ENCODE measurements at regions of chr17 and their contacts with region 1.

Region 1: DNA sequence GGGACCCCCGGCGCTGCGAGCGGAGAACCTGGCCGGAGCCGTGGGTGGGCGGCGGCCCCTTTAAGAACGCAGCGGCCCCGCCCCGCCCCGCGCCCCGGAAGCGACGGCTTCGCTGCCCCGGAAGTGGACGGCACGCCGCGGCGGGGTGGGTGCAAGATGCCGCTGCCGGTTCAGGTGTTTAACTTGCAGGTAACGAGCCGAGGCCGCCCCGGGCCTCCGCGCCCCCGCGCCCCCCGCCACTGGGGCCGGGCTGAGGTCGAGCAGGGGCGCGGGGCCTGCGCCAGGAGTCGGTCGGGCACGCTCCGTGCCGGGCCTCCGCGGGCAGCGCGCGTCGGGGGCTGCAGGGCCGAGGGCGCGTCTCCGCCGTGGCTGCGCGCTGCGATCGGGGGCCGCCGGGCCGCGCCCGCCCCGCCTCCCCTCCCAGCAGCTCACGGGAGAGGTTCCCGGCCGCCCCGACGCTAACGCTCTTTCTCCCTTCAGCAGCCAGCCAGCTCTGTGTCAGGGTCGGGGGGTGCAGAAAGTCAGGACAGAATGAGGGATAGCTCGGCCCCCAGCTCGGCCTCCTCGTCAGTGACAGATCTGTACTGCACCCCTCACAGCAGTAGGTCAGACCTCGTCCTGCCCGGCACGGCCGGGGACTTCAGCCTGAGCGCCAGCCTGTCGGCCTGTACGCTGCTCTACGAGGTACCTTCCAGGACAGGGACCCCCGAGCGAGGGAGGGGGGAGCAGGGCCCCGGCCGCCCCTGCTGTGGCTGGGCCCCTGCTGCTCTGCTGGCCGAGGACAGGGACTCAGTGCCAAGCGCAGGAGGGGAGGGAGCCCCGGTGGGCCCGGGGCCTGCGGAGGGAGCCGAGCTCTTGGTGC is at the starts of genes GPS1 and RFNG:
- DNase-seq: peak; percentile 87
- ATAC-seq: peak; percentile 96
- H3K4me3 Mint-ChIP-seq: peak within 1 kb of the TSS; percentile 83
- H3K27ac Mint-ChIP-seq: peak within 1 kb of the TSS; percentile 78
- H3K4me1 Mint-ChIP-seq: peaks cover 28% of the 10 kb centered on the region
- H3K27me3 Mint-ChIP-seq: no peaks in the 10 kb centered on the region
- total RNA-seq, gene GPS1: 92.4 to 106 TPM
- total RNA-seq, gene RFNG: 20.9 to 23.0 TPM

Region 2: DNA sequence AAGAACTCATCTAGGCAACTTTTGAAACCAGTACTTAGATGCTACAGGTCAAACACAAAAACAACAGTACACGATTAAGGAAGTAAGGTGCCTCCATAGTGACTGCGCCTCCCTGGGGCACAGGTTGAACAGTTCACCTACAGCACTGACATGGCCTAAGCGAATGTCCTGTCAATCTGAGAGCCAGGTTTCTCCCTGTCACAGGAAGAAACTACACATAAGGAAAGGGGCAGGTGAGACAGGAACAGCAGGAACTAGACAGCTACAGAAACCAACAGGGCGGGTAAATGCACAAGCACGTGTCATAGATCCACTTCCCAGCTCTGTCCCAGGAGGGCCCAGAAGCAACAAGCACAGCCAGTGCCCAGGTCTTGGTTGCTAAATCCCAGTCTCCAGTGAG is 172.9 kb before region 1 on chr17:
- CTCF ChIA-PET with region 1: no interaction called
- DNase-seq: no peak
- ATAC-seq: no peak
- H3K4me3 Mint-ChIP-seq: no peak overlapping the region
- H3K27ac Mint-ChIP-seq: no peak overlapping the region
- H3K4me1 Mint-ChIP-seq: peaks cover 2% of the 10 kb centered on the region
- H3K27me3 Mint-ChIP-seq: no peaks in the 10 kb centered on the region

Region 3: DNA sequence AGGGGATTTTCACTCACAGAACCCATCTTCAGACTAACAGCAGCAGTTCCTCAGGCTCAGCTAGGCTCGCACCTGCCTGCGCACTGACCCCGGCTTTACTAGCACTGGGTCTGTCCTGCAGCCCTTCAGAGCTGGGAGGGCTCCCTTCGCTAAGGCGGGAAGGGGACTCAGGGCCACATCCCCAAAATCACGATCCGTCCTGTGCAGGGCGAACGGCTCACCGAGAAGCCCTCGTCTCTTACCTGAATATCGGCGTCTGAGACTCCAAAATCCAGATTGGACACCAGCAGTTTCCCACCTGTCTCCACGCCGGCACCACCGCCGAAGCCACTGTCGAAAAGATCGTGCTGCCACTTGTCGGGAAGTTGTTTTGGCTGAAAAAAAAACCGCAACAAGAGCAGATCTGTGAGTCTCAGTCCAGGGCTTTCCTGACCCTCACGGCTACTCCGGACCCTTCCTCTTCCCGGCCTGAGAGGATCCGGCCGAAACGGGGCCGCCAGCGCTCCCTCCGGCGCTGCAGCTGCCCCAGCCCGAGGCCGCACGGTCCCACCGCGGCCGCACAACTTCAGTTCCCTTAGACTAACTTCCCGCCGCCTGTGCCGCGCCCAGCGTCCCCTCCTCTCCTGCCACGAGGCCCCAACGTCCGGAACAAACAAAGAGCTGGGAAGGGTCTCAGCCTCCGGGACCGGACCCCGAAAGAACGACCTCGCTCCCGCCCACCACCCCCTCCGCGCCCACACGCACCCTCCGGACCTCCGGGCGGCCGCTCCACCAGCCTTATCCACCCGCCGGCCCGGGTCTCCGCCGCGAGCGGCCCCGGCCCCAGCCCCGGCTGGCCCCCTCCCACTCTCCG is 161.3 kb before region 1 on chr17:
- CTCF ChIA-PET with region 1: no interaction called
- DNase-seq: no peak
- ATAC-seq: peak; percentile 5
- H3K4me3 Mint-ChIP-seq: peak overlapping the region; percentile 86
- H3K27ac Mint-ChIP-seq: peak overlapping the region; percentile 96
- H3K4me1 Mint-ChIP-seq: peaks cover 38% of the 10 kb centered on the region
- H3K27me3 Mint-ChIP-seq: no peaks in the 10 kb centered on the region

Region 4: DNA sequence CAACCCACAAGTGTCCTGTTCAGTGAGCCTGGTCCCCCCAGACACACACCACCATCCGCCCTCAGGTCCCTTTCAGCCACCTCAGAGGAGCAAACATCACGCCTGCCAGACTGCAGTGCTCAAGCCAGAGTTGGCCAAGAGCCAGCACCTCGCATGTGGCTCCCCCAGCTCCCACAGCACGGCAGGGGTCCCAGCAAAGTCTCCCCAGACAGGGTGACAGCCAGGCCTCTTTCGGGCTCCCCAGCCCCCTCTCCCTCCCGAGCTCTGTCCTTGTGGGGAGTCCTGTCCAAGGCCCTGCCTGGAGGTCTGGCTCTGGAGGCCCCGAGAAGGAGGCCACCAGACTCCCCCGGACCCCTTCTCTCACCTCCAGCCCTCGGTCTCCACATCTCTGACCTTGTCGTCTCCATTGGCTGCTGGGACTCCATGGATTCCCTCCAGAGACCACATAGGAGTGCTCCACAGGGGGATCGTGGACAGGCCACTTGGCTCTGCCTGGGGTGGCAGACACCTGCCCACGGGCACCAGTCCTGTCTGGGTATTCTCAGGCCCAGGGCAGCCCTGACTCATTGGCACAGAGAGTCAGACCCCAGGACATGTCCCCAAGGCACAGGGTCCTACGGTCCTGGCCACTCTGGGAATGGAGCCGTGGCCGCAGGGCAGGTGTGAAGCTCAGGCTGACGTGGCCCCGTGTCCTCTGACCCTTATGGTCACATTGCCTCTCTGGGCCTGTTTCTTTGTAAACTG is 103.2 kb before region 1 on chr17:
- CTCF ChIA-PET with region 1: no interaction called
- DNase-seq: no peak
- ATAC-seq: no peak
- H3K4me3 Mint-ChIP-seq: no peak overlapping the region
- H3K27ac Mint-ChIP-seq: no peak overlapping the region
- H3K4me1 Mint-ChIP-seq: no peaks in the 10 kb centered on the region
- H3K27me3 Mint-ChIP-seq: peaks cover 8% of the 10 kb centered on the region

Region 5: DNA sequence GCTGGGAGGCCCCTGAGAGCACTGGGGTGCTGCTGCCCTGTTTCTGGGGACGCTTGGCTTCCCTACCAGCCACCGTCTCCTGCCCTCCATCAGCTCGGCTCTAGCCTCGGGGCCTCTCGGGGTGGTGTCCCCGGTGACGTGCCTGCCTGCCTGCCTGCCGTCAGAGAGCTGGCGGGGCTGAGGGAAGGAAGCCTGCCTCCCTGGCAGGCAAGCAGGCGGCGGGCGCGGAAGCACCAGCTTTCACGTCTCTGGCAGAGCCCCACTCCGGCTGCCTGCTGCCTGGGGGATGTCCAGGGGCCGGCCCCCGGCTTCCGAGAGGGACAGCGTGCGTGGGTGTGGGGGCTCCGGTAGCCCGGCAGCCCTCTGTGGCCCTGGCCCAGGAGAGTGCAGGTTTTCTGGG is 38.7 kb before region 1 on chr17:
- CTCF ChIA-PET with region 1: no interaction called
- DNase-seq: no peak
- ATAC-seq: no peak
- H3K4me3 Mint-ChIP-seq: no peak overlapping the region
- H3K27ac Mint-ChIP-seq: no peak overlapping the region
- H3K4me1 Mint-ChIP-seq: peaks cover 7% of the 10 kb centered on the region
- H3K27me3 Mint-ChIP-seq: no peaks in the 10 kb centered on the region

Region 6: DNA sequence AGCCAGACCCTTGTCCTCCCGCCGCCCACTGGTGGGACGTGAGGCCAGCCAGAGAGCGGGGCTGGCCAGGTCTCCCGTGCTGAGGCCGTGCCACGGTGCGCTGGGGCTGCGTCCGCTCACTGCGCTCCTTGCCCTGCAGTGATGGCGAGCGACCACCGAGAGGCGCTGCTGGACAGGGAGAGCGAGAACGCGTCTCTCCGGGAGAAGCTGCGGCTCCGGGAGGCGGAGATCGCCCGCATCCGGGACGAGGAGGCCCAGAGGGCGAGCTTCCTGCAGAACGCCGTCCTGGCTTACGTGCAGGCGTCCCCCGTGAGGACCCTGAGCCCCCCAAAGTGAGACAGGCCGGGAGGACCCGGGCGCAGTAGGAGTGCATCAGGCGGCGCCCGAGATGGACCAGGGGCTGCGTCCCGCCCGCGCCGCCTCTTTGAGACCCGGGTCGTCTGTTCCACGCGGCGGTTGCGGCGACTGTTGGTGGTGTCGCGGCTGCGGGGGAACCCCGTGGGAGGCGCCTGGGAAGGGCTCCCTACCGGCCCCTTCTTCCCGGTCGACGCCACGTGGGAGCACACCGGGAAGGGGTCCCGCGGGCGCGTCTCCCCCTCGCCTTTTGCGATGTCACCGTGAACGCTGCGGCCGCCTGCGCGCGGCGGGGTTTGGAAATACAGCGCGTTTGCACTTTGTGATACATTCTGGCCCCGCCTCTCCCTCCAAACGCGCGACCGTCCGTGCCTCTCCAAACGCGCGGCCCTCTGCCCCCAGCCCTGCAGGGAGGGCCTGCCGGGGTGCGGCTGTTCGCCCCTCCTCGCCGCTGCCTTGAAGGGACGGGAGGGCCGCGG is 21.3 kb before region 1 on chr17:
- CTCF ChIA-PET with region 1: interaction called, 11 read pairs
- DNase-seq: peak; percentile 88
- ATAC-seq: peak; percentile 71
- H3K4me3 Mint-ChIP-seq: peak overlapping the region; percentile 70
- H3K27ac Mint-ChIP-seq: peak overlapping the region; percentile 59
- H3K4me1 Mint-ChIP-seq: peaks cover 28% of the 10 kb centered on the region
- H3K27me3 Mint-ChIP-seq: no peaks in the 10 kb centered on the region

Region 7: GRCh38 chr17:82037113-82037888 is 14.7 kb before region 1 on chr17 and contains the start of gene DCXR:
- CTCF ChIA-PET with region 1: interaction called, 10 read pairs
- DNase-seq: peak; percentile 98
- ATAC-seq: peak; percentile 95
- H3K4me3 Mint-ChIP-seq: peak within 1 kb of the TSS; percentile 74
- H3K27ac Mint-ChIP-seq: peak within 1 kb of the TSS; percentile 91
- H3K4me1 Mint-ChIP-seq: peaks cover 24% of the 10 kb centered on the region
- H3K27me3 Mint-ChIP-seq: no peaks in the 10 kb centered on the region
- total RNA-seq, gene DCXR: 120 to 124 TPM